ENCODE measurements at regions of chr3 and their contacts with region 1.

Region 1: DNA sequence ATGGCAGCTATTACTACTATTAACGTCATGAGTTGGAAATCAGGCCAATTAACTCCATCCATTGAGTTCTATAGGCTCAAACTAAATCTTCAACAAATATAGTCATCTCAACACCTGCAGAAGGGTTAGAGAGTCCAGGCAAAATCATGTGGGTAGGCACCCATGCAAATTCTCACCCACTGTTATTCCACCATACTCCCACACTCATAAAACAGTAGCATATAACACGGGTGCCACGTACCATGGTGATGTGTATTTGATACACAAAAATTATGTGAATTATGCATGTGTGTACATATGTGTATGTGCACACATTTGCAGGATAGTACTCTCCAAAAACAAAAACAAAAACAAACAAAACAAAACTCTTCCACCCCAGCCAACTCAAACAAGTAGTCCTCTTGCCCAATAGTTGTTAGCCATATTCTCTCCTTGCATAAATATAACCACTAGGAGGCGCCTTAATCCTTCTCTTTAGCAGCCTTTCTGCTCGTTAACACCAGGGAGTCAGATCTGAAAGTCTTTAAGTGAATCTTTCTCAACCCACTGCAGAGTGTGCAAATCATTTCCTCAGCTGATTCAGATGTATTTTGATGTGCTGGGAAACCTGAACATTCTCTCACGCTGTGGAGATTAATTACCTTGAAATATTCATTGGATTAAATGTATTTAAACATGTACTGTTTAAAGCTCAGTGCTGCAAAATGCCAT is 38.0 kb upstream of the COPB2 start:
- DNase-seq: peak; percentile 53
- H3K4me3 ChIP-seq: no peak overlapping the region
- H3K27ac ChIP-seq: no peak overlapping the region
- H3K4me1 ChIP-seq: no peaks in the 10 kb centered on the region
- H3K27me3 ChIP-seq: no peaks in the 10 kb centered on the region
- CTCF ChIP-seq: peak; percentile 73 to 86 (median 82)
- POLR2A ChIP-seq: no peak

Region 2: DNA sequence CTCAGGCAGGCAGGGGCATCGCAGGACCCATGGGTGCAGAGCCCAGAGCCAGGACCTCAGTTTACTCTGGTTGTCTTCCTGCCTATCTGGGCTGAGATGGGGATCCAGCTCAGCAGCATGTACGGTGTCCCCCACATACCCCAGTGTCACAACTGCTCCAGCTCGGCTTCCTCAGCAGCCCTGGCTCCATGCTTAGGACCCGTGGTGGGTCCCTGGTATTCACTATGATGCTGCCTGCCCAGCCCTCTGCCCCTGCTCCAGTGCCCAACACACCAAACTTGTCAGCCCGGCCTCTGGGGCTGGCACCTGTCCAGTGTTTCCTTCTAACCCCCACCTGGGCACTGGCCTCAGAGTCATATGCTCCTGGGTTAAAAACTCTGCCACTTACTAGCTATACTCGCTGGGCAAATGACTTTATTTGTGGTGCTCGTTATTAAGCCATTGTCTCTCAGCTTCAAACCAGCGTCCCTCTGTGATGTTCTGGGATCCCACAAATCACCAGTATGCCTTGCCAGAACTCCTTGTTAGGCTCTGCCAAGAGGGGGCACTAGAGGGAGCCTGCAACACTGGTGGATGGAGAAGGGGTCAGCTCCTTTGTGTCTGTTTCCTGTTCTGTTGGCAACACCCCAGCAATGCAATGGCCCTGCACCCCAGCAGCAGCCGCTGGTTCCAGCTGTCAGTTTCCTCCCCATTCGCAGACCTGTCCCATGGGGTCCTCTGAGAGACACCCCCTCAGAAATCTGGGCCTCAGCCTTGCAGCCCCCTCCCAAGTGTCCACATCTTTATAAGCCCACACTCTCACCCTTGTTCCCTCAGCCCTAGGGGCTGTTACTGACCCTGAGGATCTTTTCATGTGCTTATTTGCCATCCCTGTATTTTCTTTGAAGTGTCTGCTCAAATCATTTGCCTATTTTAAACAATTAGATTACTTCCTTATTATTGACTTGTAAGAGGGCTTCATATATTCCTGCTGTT is 107.7 kb before region 1 on chr3:
- intact Hi-C with region 1: no loop called
- DNase-seq: no peak
- H3K4me3 ChIP-seq: no peak overlapping the region
- H3K27ac ChIP-seq: no peak overlapping the region
- H3K4me1 ChIP-seq: no peaks in the 10 kb centered on the region
- H3K27me3 ChIP-seq: no peaks in the 10 kb centered on the region
- CTCF ChIP-seq: no peak
- POLR2A ChIP-seq: no peak

Region 3: GRCh38 chr3:139561959-139562676 is 134.7 kb after region 1 on chr3:
- intact Hi-C with region 1: loop called (anchors 2 kb)
- DNase-seq: no peak
- H3K4me3 ChIP-seq: no peak overlapping the region
- H3K27ac ChIP-seq: no peak overlapping the region
- H3K4me1 ChIP-seq: no peaks in the 10 kb centered on the region
- H3K27me3 ChIP-seq: no peaks in the 10 kb centered on the region
- CTCF ChIP-seq: peak in 3 of 4 experiments; percentile 59 to 77 (median 71)
- POLR2A ChIP-seq: no peak

Region 4: GRCh38 chr3:139935016-139935865 is 507.8 kb after region 1 on chr3 and contains the start of gene CLSTN2:
- intact Hi-C with region 1: loop called (anchors 10 kb)
- DNase-seq: peak; percentile 17
- H3K4me3 ChIP-seq: peak within 1 kb of the TSS; percentile 18 to 27
- H3K27ac ChIP-seq: no peak within 1 kb of the TSS
- H3K4me1 ChIP-seq: no peaks in the 10 kb centered on the region
- H3K27me3 ChIP-seq: no peaks in the 10 kb centered on the region
- CTCF ChIP-seq: peak in 1 of 4 experiments; percentile 26
- POLR2A ChIP-seq: no peak
- total RNA-seq, gene CLSTN2: 3.5 to 60.3 TPM

Region 5: DNA sequence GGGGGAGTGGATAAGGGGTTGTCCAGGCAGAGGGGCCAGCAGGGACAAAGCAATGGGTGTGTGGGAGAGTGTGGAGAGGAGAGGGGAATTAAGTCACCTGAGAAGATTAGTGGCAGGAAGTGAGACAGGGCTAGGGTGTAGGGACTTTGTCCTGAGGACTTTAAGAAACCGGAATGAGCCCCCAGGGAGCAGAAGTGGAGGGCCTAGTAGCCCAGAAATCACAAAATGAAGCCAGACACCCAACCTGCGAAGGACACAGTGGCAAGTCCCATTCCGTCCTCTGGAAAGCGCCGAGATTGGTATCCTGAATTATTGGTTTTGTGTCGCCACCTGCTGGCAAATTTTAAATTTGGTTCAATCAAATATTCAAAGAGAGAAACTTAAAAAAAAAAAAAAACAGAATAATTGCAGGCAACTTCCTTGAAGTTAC is 1436.2 kb after region 1 on chr3:
- intact Hi-C with region 1: loop called (anchors 5 kb)
- DNase-seq: peak; percentile 47
- H3K4me3 ChIP-seq: no peak overlapping the region
- H3K27ac ChIP-seq: no peak overlapping the region
- H3K4me1 ChIP-seq: no peaks in the 10 kb centered on the region
- H3K27me3 ChIP-seq: no peaks in the 10 kb centered on the region
- CTCF ChIP-seq: peak in 3 of 4 experiments; percentile 44 to 50 (median 50)
- POLR2A ChIP-seq: no peak

Measured in prostate gland (tissue), 2 donors.